ENCODE measurements at regions of chrX and their contacts with region 1.

Region 1: DNA sequence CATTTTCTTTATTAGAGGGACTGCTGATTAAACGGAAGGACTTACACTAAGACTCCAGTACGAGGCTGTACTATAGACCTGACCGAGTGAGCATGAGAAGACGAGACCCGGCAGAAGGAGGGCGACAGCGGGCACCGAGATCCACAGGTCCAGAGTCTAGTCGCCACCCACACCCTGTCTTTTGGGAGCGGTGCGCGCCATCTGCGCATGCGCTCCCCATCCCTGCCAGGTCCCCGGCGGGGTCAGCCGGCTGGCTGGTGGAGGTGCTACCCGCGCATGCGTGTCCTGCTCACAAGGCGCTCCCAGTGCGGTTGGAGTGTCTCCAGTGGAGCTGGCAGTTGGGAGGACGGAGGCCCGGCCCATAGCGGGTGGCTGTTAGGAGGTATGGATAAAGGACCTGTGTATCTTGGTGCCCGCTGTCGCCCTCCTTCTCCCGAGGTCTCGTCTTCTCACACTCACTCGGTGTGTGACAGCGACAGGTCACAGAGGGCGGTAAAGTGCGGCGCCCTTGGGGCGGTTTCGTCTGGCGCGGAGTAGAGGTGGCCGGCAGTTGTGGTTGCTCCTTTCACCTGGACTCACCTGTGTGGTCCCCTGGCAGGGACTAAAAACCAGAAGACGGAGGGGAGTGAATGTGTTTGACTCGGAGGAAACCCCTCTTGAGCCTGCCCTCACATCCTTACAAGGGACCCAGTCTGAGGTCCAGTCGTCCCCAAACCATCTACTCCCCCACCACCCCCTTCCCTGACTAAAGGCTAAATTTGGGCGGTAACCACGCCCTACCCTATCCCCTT is 7.6 kb upstream of the HSD17B10 start:
- DNase-seq: peak; percentile 72
- H3K4me3 Mint-ChIP-seq: peak overlapping the region; percentile 78
- H3K27ac Mint-ChIP-seq: no peak overlapping the region
- H3K4me1 Mint-ChIP-seq: peaks cover 26% of the 10 kb centered on the region
- H3K27me3 Mint-ChIP-seq: no peaks in the 10 kb centered on the region

Region 2: GRCh38 chrX:53660004-53660403 is 218.3 kb after region 1 on chrX:
- CTCF ChIA-PET with region 1: no interaction called
- intact Hi-C with region 1: no loop called
- DNase-seq: no peak
- H3K4me3 Mint-ChIP-seq: no peak overlapping the region
- H3K27ac Mint-ChIP-seq: no peak overlapping the region
- H3K4me1 Mint-ChIP-seq: peaks cover 48% of the 10 kb centered on the region
- H3K27me3 Mint-ChIP-seq: no peaks in the 10 kb centered on the region

Region 3: DNA sequence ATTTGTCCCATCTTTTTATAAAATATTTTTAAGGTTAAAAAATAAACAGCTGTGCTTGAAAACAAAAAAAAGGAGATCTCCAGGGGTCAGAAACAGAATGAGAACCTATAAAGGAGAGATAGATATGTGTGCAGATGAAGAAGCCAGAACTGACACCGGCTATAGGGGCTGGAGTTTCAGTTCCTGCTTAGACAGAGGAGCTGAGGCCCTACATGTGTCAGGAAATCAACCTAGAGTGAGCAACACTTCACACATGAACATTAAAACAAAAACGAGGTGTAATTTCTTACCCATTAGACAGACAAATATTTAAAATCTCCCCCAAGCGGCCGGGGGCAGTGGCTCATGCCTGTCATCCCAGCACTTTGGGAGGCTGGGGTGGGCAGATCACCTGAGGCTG is 262.6 kb after region 1 on chrX:
- CTCF ChIA-PET with region 1: interaction called, 10 read pairs
- intact Hi-C with region 1: no loop called
- DNase-seq: no peak
- H3K4me3 Mint-ChIP-seq: no peak overlapping the region
- H3K27ac Mint-ChIP-seq: no peak overlapping the region
- H3K4me1 Mint-ChIP-seq: no peaks in the 10 kb centered on the region
- H3K27me3 Mint-ChIP-seq: no peaks in the 10 kb centered on the region

Measured in activated naive CD4-positive, alpha-beta T cell treated with anti-CD3 and anti-CD28 coated beads for 36 hours (primary cell).